ENCODE measurements at regions of chr6 and their contacts with region 1.

Region 1: DNA sequence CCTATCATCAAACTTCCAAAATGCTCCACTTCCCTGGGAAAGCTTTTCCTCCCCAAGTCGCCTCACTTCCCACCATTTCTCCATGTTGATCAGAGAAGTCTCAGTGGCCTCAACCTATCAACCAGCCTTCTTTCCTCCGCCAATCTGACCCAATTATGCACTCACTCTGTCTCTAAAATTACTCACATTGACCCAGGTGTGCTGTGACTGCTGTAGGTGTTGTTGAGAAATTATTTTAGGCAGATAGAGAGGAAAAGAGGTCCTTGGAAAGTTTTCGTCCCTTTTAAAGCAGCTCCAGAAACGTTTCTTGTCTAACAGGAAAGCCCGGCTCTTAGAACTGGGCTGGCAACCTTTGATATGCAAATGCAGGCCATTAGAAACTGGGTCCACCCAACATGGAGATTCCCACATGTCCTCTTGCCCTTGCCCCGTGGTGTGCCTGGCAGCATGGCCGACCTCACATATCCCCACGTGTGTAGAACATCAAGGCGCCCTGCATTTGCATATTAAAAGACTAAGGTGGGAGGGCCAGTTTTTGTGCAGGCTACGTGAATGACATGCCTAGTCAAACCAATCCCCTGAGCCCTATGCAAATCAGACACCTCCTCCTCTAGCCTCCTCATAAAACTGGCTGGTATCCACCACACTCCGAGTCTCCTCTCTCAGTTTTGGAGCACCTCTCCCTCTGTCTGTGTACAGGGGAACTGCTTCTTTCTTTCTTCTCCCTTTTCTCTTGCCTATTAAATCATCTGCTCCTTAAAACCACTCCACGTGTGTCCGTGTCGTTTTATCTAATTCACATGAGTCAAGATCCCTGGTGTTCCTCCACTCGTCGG is 12.9 kb downstream of the IPCEF1 start:
- DNase-seq: peak; percentile 60
- H3K4me3 Mint-ChIP-seq: peak overlapping the region; percentile 63
- H3K27ac Mint-ChIP-seq: peak overlapping the region; percentile 38
- H3K4me1 Mint-ChIP-seq: peaks cover 18% of the 10 kb centered on the region
- H3K27me3 Mint-ChIP-seq: no peaks in the 10 kb centered on the region
- CTCF ChIP-seq: no peak

Region 2: GRCh38 chr6:154301839-154302752 is 41.6 kb before region 1 on chr6:
- CTCF ChIA-PET with region 1: no interaction called
- intact Hi-C with region 1: loop called (anchors 5 kb)
- DNase-seq: no peak
- H3K4me3 Mint-ChIP-seq: no peak overlapping the region
- H3K27ac Mint-ChIP-seq: no peak overlapping the region
- H3K4me1 Mint-ChIP-seq: peaks cover 13% of the 10 kb centered on the region
- H3K27me3 Mint-ChIP-seq: no peaks in the 10 kb centered on the region
- CTCF ChIP-seq: no peak

Region 3: GRCh38 chr6:155219858-155220301 is 876.2 kb after region 1 on chr6:
- CTCF ChIA-PET with region 1: no interaction called
- intact Hi-C with region 1: no loop called
- DNase-seq: no peak
- H3K4me3 Mint-ChIP-seq: no peak overlapping the region
- H3K27ac Mint-ChIP-seq: no peak overlapping the region
- H3K4me1 Mint-ChIP-seq: peaks cover 15% of the 10 kb centered on the region
- H3K27me3 Mint-ChIP-seq: no peaks in the 10 kb centered on the region
- CTCF ChIP-seq: no peak

Measured in Calu3 (cell line).